BJ (cell line): ENCODE measurements at regions of chr12 and their contacts with region 1.

Region 1: GRCh38 chr12:31765931-31766330 is 37.1 kb upstream of the AMN1 start:
- DNase-seq: no peak
- H3K4me3 ChIP-seq: no peak overlapping the region
- H3K27me3 ChIP-seq: no peaks in the 10 kb centered on the region
- CTCF ChIP-seq: no peak

Region 2: DNA sequence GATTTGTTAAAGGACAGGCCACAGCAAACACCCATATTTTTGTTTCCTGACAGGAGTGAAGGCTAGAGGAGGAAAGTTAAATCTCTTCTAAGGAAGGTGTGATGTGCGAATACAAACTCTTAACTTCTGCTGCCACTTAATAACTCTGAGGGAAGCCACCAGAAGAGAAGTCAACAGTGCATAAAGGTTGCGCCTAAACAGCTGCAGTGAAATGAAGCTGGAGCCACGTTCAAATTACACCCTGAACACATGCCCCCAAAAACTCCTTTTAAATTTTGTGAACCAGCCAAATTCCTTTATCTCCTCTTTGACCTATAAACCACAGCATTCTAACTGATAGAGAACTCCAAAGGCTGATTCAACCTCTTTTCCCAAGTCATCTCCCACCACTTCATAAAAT is 197.4 kb before region 1 on chr12:
- CTCF ChIA-PET with region 1: no interaction called
- POLR2A ChIA-PET with region 1: interaction called, 24 read pairs
- DNase-seq: no peak
- H3K4me3 ChIP-seq: no peak overlapping the region
- H3K27me3 ChIP-seq: no peaks in the 10 kb centered on the region
- CTCF ChIP-seq: no peak